ENCODE measurements at regions of chr2 and their contacts with region 1.

Region 1: GRCh38 chr2:15636972-15637785 is 45.5 kb downstream of the DDX1 start:
- DNase-seq: no peak
- H3K4me3 Mint-ChIP-seq: no peak overlapping the region
- H3K27ac Mint-ChIP-seq: no peak overlapping the region
- H3K4me1 Mint-ChIP-seq: no peaks in the 10 kb centered on the region
- H3K27me3 Mint-ChIP-seq: no peaks in the 10 kb centered on the region

Region 2: DNA sequence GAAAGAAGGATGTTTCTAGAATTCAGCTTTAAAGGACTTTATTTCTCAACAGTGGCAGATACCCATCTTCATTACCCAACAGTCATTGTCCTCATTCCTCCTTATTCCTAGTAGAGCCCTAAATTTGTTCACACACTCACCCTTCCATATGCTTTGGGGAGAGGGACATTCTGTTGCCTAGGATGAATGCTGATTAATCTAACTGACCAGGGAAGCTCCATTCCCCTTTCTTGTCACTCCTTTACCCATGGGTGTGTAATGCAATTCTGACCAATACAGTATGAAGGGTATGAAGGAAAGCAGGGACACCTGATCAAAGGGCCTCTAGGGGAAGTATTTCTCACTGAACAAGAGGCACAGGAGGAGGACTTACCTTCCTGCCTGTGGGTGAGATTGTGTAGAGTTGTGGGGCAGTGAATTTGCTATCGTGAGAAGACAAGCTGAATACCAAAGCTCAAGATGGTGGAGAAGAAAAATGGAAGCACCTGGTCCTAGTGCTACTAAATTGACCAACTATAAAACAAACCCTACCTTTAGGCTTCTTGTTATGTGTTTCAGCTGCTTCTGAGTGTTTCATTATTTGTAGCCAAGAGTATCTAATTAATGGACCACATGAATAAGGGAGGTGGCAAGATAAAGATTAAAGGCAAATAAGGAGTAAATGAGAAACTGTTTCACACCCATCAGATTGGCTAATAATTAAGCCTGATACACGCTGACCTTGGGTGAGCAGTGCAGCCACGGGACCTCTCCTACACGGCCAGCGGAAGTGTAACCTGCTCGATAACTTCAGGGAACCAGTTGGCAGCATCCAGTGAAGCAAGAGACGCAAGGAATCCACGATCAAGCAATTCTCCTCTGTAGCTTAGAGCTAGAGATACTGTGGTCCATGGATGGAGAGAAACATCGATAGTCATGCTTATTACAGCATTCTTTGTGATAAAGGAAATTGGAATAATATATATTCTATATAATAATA is 505.5 kb after region 1 on chr2:
- intact Hi-C with region 1: loop called (anchors 5 kb)
- DNase-seq: no peak
- H3K4me3 Mint-ChIP-seq: no peak overlapping the region
- H3K27ac Mint-ChIP-seq: no peak overlapping the region
- H3K4me1 Mint-ChIP-seq: no peaks in the 10 kb centered on the region
- H3K27me3 Mint-ChIP-seq: no peaks in the 10 kb centered on the region

Region 3: GRCh38 chr2:16281451-16282336 is 644.5 kb after region 1 on chr2:
- intact Hi-C with region 1: loop called (anchors 2 kb)
- DNase-seq: no peak
- H3K4me3 Mint-ChIP-seq: no peak overlapping the region
- H3K27ac Mint-ChIP-seq: no peak overlapping the region
- H3K4me1 Mint-ChIP-seq: no peaks in the 10 kb centered on the region
- H3K27me3 Mint-ChIP-seq: peaks cover 2% of the 10 kb centered on the region

Measured in activated T-helper 1 cell treated with anti-CD3 and anti-CD28 coated beads, Interleukin-12 subunit alpha, Interleukin-12 subunit beta, Interleukin-2, Interleukin-4 antibody, amounts not matched to agents 30 ng/mL and 10 ng/mL and 1 ng/mL, durations not matched to agents 14 hours and 24 hours and 36 hours (primary cell).